Activated naive CD4-positive, alpha-beta T cell treated with anti-CD3 and anti-CD28 coated beads for 36 hours (primary cell): ENCODE measurements at regions of chr3 and their contacts with region 1.

Region 1: GRCh38 chr3:183188895-183189462 is 26.4 kb upstream of the LAMP3 start:
- DNase-seq: peak; percentile 47
- H3K4me3 Mint-ChIP-seq: no peak overlapping the region
- H3K27ac Mint-ChIP-seq: no peak overlapping the region
- H3K4me1 Mint-ChIP-seq: peaks cover 27% of the 10 kb centered on the region
- H3K27me3 Mint-ChIP-seq: no peaks in the 10 kb centered on the region

Region 2: GRCh38 chr3:183377307-183377959 is 188.5 kb after region 1 on chr3:
- CTCF ChIA-PET with region 1: interaction called, 318 read pairs
- intact Hi-C with region 1: loop called (anchors 1 kb)
- DNase-seq: no peak
- H3K4me3 Mint-ChIP-seq: no peak overlapping the region
- H3K27ac Mint-ChIP-seq: no peak overlapping the region
- H3K4me1 Mint-ChIP-seq: peaks cover 21% of the 10 kb centered on the region
- H3K27me3 Mint-ChIP-seq: no peaks in the 10 kb centered on the region